A549 (cell line): ENCODE measurements at regions of chr17 and their contacts with region 1.

Region 1: DNA sequence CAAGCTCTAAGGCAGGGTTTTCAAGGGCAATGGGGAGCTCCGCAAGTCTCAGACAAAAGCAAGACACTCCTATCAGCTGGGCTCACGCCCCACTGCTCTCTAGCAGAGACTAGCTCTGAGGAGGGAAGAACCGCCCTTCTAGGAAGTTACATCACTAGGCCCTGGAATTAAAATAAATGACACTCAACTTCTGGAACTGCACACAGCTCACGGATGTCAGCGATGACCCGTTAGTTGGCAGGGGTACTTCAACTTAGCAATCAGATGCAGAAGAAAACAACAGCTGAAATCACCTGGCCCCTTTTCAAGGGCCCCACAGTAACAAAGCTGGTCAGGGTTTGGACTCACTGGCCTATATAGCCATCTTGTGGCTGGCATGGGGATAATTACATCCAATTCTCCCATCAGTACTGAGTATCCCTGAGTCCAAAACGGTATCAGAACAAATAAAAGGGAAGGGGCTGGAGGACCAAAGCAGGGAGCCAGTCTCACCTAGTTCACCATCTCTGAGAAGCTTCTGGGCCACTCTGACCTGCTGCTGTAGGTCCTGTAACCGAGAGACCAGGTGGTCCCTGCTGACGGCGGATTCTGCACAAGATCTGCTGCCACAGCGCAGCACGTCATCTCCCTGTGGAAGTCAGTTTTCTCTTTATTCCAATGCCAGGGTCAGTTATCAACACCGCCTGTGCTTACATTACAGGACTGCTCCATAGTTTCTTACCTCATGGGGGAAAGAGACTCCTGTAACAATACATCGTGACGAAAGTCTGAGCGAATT is 22.2 kb downstream of the SERPINF1 start:
- DNase-seq: peak; percentile 68 to 77
- ATAC-seq: peak; percentile 78 to 86
- H3K4me3 ChIP-seq: no peak overlapping the region
- H3K27ac ChIP-seq: 0 out of 6 replicates have a peak overlapping the region, but pooled peaks of 1 of the 2 experiments have one; percentile 6
- H3K4me1 ChIP-seq: peaks cover 23% of the 10 kb centered on the region
- CTCF ChIP-seq: peak; percentile 77
- EP300 ChIP-seq: no peak
- POLR2A ChIP-seq: no peak
- RAD21 ChIP-seq: peak; percentile 85 to 93

Region 2: DNA sequence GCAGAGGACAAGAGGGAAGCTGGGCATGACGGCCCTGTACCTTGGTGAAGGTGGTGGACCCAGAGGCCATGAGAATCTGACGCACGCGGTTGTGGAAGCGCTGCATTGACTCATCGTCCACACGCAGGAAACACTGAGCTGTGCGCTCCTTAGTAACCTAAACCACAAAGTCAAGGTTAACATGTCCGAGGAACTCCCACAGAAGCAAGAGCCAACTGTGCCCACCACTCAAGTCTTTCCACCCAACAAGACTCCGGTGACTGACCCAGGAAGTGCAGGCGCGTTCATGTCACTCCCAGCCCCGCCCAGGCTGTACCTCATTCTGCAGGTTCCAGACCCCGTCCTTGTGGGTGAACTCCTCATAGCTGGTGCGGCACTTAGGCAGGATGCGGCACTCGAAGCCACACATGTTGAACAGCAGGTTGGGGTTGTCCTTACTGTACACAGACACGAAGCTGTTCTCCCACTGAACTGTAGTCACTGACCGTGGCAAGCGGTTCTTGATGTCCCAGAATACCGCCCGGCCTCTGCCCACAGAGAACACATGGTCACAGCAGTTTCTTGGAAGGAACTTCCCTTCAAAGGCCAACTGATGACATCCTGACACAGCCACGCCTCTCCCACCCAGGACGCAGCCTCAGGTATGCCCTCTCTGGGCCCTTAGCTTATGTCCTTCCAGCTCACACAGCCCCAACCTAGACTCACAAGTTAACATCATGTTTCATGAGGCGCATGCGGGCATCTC is 110.8 kb before region 1 on chr17:
- CTCF ChIA-PET with region 1: interaction called, 16 read pairs
- POLR2A ChIA-PET with region 1: no interaction called
- DNase-seq: no peak
- ATAC-seq: no peak; a peak in 1 of 6 replicates
- H3K4me3 ChIP-seq: no peak overlapping the region
- H3K27ac ChIP-seq: no peak overlapping the region
- H3K4me1 ChIP-seq: no peaks in the 10 kb centered on the region
- CTCF ChIP-seq: no peak
- EP300 ChIP-seq: no peak
- POLR2A ChIP-seq: no peak
- RAD21 ChIP-seq: no peak

Region 3: DNA sequence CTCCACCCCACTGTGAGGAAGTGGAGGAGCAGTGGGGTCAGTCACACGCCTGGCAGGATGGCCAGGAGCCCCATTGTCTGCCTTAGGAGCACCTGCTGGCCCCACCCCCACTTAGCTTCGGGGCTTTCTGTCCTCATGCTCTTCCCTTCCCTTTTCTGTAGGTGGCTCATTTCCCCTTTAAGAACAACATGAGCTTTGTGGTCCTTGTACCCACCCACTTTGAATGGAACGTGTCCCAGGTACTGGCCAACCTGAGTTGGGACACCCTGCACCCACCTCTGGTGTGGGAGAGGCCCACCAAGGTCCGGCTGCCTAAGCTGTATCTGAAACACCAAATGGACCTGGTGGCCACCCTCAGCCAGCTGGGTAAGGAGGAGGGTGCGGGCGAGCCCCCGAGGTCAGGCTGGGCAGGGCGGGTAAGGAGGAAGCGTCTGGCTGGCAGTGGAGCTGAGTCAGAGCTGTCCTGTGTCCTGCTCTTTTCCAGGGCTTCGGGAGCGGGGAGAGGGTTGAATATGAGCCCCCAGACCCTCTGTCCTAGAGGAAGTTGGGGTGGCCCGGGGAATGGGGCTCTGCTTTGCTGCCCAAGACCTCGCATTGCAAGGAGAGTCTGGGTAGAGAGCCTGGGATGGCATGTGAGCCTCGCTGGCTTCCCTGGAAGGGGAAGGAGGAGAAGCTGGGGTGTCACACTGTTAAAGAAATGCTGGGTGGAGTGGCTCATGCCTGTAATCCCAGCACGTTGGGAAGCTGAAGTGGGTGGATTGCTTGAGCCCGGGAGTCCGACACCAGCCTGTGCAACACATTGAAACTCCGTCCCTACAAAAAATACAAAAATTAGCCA is 31.4 kb before region 1 on chr17:
- CTCF ChIA-PET with region 1: interaction called, 40 read pairs
- POLR2A ChIA-PET with region 1: interaction called, 3 read pairs
- DNase-seq: peak; percentile 68 to 83
- ATAC-seq: peak; percentile 88 to 92
- H3K4me3 ChIP-seq: peak overlapping the region; percentile 33
- H3K27ac ChIP-seq: peak overlapping the region; percentile 76 to 88
- H3K4me1 ChIP-seq: peaks cover 13% of the 10 kb centered on the region
- CTCF ChIP-seq: no peak
- EP300 ChIP-seq: no peak
- POLR2A ChIP-seq: peak; percentile 26; the same call in 1 of the 2 replicates
- RAD21 ChIP-seq: no peak

Region 4: DNA sequence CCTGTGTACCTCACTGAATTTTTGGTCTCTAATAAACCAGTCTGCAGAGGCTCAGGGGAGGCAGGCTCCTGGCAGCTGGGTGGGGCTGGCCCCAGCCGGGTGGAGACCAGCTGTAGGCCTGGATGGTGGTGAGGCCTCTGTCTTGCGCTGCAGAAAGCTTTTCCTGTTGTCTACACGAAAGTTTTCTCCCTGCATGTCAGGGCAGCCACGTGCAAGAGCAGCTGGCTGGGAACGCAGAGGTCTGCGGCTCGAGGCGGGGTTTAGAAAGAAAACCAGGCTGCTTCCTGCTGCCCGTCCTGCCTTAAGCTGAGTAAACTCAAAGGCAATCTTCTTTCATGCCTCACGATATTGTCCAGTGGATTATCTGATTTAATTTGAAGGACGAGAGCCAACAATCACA is 19.7 kb before region 1 on chr17:
- CTCF ChIA-PET with region 1: interaction called, 37 read pairs
- POLR2A ChIA-PET with region 1: no interaction called
- DNase-seq: no peak
- ATAC-seq: peak in 1 of 2 experiments; percentile 11; a peak in 2 of 6 replicates
- H3K4me3 ChIP-seq: no peak overlapping the region
- H3K27ac ChIP-seq: 0 out of 6 replicates have a peak overlapping the region, but pooled peaks of 1 of the 2 experiments have one; percentile 17
- H3K4me1 ChIP-seq: peaks cover 20% of the 10 kb centered on the region
- CTCF ChIP-seq: no peak
- EP300 ChIP-seq: no peak
- POLR2A ChIP-seq: no peak
- RAD21 ChIP-seq: no peak

Region 5: GRCh38 chr17:1769822-1770477 is 14.1 kb before region 1 on chr17:
- CTCF ChIA-PET with region 1: interaction called, 51 read pairs
- POLR2A ChIA-PET with region 1: interaction called, 7 read pairs
- DNase-seq: peak; percentile 61 to 78
- ATAC-seq: peak; percentile 79
- H3K4me3 ChIP-seq: no peak overlapping the region
- H3K27ac ChIP-seq: peak overlapping the region; percentile 60 to 83
- H3K4me1 ChIP-seq: peaks cover 11% of the 10 kb centered on the region
- CTCF ChIP-seq: no peak
- EP300 ChIP-seq: no peak
- POLR2A ChIP-seq: no peak
- RAD21 ChIP-seq: no peak

Region 6: GRCh38 chr17:1882836-1883235 is 98.8 kb after region 1 on chr17:
- CTCF ChIA-PET with region 1: interaction called, 10 read pairs
- POLR2A ChIA-PET with region 1: no interaction called
- DNase-seq: peak; percentile 59 to 66
- ATAC-seq: peak; percentile 41 to 80; a peak in 3 of 6 replicates
- H3K4me3 ChIP-seq: no peak overlapping the region
- H3K27ac ChIP-seq: no peak overlapping the region
- H3K4me1 ChIP-seq: no peaks in the 10 kb centered on the region
- CTCF ChIP-seq: peak; percentile 58
- EP300 ChIP-seq: no peak
- POLR2A ChIP-seq: no peak
- RAD21 ChIP-seq: peak; percentile 59 to 65